ENCODE measurements at regions of chr2 and their contacts with region 1.

Region 1: DNA sequence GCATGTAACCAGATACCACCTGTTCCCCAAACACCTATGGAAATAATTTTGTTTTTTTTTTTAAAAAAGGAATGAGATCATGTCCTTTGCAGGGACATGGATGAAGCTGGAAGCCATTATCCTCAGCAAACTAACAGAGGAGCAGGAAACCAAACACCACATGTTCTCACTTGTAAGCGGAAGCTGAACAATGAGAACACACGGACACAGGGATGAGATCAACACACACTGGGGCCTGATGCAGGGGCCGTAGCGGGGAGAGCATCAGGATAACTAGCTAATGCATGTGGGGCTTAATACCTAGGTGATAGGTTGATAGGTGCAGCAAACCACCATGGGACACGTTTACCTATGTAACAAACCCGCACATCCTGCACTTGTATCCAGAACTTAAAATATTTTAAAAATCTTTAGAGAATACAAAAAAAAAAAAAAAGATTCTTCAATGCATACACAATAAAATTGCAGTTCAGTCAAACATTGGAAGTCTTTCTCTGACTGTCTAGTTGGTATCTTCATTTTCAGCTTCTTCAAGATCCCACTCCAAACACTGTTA is 11.6 kb upstream of the CASP10 start:
- DNase-seq: no peak
- H3K4me3 ChIP-seq: no peak overlapping the region
- H3K27ac ChIP-seq: no peak overlapping the region
- H3K4me1 ChIP-seq: no peaks in the 10 kb centered on the region
- H3K27me3 ChIP-seq: no peaks in the 10 kb centered on the region
- CTCF ChIP-seq: no peak
- EP300 ChIP-seq: no peak
- POLR2A ChIP-seq: no peak

Region 2: GRCh38 chr2:200901459-200902072 is 269.8 kb before region 1 on chr2:
- intact Hi-C with region 1: loop called in 3 of 4 experiments (anchors 5 to 10 kb)
- DNase-seq: peak in 2 of 5 donors; percentile 25 to 59
- H3K4me3 ChIP-seq: no peak overlapping the region
- H3K27ac ChIP-seq: no peak overlapping the region
- H3K4me1 ChIP-seq: no peaks in the 10 kb centered on the region
- H3K27me3 ChIP-seq: no peaks in the 10 kb centered on the region
- CTCF ChIP-seq: peak; percentile 25 to 60 (median 55)
- EP300 ChIP-seq: no peak
- POLR2A ChIP-seq: no peak